ENCODE measurements at regions of chr1 and their contacts with region 1.

Region 1: GRCh38 chr1:206912445-206913095 is 9.2 kb downstream of the FCMR start:
- DNase-seq: peak; percentile 59
- H3K4me3 ChIP-seq: no peak overlapping the region
- H3K27ac ChIP-seq: no peak overlapping the region
- H3K4me1 ChIP-seq: peaks cover 22% of the 10 kb centered on the region
- H3K27me3 ChIP-seq: no peaks in the 10 kb centered on the region
- CTCF ChIP-seq: peak; percentile 77 to 81

Region 2: GRCh38 chr1:206479183-206480125 is 433.1 kb before region 1 on chr1:
- CTCF ChIA-PET with region 1: no interaction called
- dilution Hi-C with region 1: no loop called
- in situ Hi-C with region 1: no loop called
- intact Hi-C with region 1: loop called (anchors 1 kb)
- DNase-seq: peak; percentile 49
- H3K4me3 ChIP-seq: no peak overlapping the region
- H3K27ac ChIP-seq: no peak overlapping the region
- H3K4me1 ChIP-seq: peaks cover 21% of the 10 kb centered on the region
- H3K27me3 ChIP-seq: no peaks in the 10 kb centered on the region
- CTCF ChIP-seq: peak; percentile 75 to 84

Region 3: DNA sequence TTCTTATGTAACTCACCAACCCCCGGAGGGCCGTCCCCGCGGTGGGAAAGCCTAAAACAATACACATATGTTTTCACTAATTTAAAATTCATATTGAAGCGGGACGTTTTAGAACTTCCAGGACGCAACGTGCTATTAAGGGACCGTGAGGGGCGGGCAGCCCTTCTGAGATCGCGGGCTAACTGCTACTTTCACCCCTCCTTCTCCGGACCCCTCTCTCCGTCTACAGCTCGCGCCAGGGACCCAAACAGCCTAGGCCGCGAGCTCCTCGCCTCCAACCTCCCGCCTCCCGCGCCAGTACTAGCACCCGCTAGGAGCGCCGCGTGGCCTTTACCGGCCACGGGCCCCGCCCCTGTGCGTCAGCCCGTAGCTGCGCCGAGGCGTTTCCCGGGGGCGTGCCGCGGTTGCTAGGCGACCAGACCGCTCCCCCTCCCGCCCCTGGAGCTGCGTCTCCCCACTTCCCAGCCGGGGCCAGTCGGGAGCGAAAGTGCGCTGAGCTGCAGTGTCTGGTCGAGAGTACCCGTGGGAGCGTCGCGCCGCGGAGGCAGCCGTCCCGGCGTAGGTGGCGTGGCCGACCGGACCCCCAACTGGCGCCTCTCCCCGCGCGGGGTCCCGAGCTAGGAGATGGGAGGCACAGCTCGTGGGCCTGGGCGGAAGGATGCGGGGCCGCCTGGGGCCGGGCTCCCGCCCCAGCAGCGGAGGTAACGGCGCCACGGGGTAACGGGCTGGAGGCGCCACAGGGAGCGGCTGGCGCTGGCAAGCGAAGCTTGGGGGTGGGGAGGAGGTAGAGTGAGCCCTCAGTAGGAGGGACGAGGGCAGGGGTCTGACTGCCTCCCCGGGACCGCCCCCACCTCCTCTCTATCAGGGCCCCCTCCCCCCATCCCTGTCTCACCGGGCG is 277.2 kb before region 1 on chr1 and contains the start of gene DYRK3:
- CTCF ChIA-PET with region 1: interaction called, 6 read pairs
- dilution Hi-C with region 1: no loop called
- in situ Hi-C with region 1: no loop called
- intact Hi-C with region 1: loop called (anchors 1 kb)
- DNase-seq: peak; percentile 94
- H3K4me3 ChIP-seq: peak within 1 kb of the TSS; percentile 86 to 95 (median 88)
- H3K27ac ChIP-seq: peak within 1 kb of the TSS; percentile 98
- H3K4me1 ChIP-seq: peaks cover 30% of the 10 kb centered on the region
- H3K27me3 ChIP-seq: no peaks in the 10 kb centered on the region
- CTCF ChIP-seq: peak in 1 of 2 donors; percentile 26
- total RNA-seq, gene DYRK3: 23.2 to 35.3 TPM

Region 4: GRCh38 chr1:206808615-206809014 is 104.0 kb before region 1 on chr1:
- CTCF ChIA-PET with region 1: interaction called, 16 read pairs
- dilution Hi-C with region 1: no loop called
- in situ Hi-C with region 1: loop called (anchors 5 kb)
- intact Hi-C with region 1: loop called (anchors 1 kb)
- DNase-seq: no peak
- H3K4me3 ChIP-seq: no peak overlapping the region
- H3K27ac ChIP-seq: no peak overlapping the region
- H3K4me1 ChIP-seq: peaks cover 7% of the 10 kb centered on the region
- H3K27me3 ChIP-seq: no peaks in the 10 kb centered on the region
- CTCF ChIP-seq: peak; percentile 15 to 52

Region 5: DNA sequence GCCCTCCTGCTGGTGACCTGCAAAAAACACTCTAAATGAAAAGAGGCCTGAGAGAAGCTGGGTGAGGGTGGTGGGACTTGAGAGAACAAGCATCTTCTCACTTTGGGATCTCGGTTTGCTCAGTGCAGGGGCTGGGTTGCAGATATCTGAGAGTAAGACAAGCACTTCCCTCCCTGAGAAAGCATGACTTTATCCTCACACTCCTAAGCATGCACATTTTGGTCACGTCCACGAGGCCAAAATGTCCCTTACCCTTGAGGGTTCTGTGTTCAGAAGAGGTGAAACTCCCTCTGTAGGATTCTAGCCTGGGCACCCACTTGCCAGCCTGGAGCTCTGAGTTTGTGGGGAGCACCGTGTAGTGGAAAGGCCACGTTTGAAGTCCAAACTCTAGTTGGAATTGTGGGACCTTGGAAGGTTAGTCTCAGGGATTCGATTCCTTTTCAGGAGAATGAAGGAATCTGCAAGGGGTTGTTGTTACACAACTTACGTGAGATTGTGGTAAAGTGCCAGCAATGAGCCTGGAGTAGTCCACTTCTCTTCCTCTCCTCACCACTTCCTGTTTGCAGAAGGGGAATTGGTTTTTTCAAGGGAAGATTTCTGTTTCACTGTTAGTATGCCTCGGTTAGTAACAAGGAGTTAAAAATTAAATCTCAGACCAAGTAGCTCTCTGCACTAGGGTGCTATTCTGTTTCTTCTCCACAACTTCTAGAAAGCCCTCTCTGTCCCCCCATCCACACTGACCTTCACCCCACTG is 54.7 kb after region 1 on chr1:
- CTCF ChIA-PET with region 1: no interaction called
- dilution Hi-C with region 1: loop called (anchors 5 kb)
- in situ Hi-C with region 1: no loop called
- intact Hi-C with region 1: no loop called
- DNase-seq: no peak
- H3K4me3 ChIP-seq: no peak overlapping the region
- H3K27ac ChIP-seq: no peak overlapping the region
- H3K4me1 ChIP-seq: no peaks in the 10 kb centered on the region
- H3K27me3 ChIP-seq: no peaks in the 10 kb centered on the region
- CTCF ChIP-seq: no peak

Region 6: DNA sequence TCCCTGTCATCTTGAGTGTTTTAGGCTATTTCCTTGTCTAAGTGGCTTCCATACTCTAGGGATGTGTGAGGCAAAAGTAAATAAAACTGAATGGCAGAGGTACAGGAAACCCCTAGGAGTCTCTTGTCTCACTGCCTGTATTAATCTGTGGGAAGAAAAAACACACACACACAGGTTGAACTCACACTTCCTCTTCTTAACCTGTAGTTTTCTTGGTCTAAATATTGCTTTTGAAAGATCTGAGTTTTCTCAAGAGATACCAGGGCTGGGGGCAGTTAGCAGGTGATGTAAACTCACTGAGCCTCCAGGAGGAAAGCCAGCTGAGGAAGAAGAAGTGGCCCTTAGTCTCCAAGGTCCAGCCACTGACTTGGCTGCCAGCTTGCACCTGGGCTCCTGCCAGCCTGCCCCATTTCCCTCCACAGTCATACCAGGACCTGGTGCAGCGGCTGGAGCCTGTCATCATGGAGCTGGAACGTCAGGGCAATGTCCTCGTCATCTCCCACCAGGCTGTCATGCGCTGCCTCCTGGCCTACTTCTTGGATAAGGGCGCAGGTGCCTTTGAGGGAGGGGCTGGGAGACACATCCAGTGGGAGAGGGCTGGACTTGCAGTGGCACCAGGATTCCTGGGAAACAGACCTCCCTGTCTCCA is 157.4 kb after region 1 on chr1:
- CTCF ChIA-PET with region 1: interaction called, 4 read pairs
- dilution Hi-C with region 1: loop called (anchors 5 kb)
- in situ Hi-C with region 1: loop called in 1 of 2 experiments (anchors 5 kb)
- intact Hi-C with region 1: no loop called
- DNase-seq: no peak
- H3K4me3 ChIP-seq: no peak overlapping the region
- H3K27ac ChIP-seq: no peak overlapping the region
- H3K4me1 ChIP-seq: peaks cover 24% of the 10 kb centered on the region
- H3K27me3 ChIP-seq: no peaks in the 10 kb centered on the region
- CTCF ChIP-seq: no peak